ENCODE measurements at regions of chr12 and their contacts with region 1.

Region 1: GRCh38 chr12:46382964-46383653 is 10.5 kb upstream of the SLC38A2 start:
- DNase-seq: peak; percentile 85 to 98
- H3K4me3 ChIP-seq: peak overlapping the region; percentile 92
- H3K27ac ChIP-seq: peak overlapping the region; percentile 97
- H3K4me1 ChIP-seq: peaks cover 39% of the 10 kb centered on the region
- H3K27me3 ChIP-seq: no peaks in the 10 kb centered on the region
- CTCF ChIP-seq: no peak; the same call in 1 of the 2 replicates

Region 2: DNA sequence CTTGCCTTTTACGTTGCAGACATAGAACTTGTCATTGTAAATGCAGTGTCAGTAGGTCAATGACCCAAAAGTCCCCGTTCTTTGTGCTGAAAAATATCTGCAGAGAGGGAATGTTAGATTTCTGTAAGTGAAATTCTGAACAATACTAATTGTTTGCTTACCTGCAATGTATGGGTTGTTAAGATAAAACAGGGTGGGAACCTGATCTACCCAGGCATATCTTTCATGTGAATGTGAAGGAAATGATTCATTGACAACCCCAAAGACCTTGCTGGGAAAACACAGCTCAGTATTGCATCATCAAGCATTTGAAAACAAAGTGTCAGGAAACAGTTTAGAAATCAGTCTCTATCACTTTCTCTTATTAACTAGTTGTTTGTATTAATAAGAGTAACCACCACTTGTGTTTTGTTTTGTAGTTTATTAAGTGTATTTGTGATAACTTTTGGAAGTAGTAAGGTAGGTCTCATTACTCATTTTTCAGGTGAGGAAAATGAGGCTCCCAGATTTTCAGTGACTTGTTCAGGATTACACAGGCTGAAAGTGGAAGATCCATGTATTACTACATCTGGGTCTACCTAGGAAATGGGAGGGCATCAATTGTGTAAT is 47.3 kb after region 1 on chr12:
- CTCF ChIA-PET with region 1: no interaction called
- POLR2A ChIA-PET with region 1: interaction called, 8 read pairs
- intact Hi-C with region 1: loop called (anchors 1 kb)
- DNase-seq: peak; percentile 28 to 98
- H3K4me3 ChIP-seq: peak overlapping the region; percentile 34; the same call in 1 of the 2 replicates
- H3K27ac ChIP-seq: peak overlapping the region; percentile 95
- H3K4me1 ChIP-seq: peaks cover 41% of the 10 kb centered on the region
- H3K27me3 ChIP-seq: no peaks in the 10 kb centered on the region
- CTCF ChIP-seq: no peak

Region 3: GRCh38 chr12:46492471-46493351 is 109.6 kb after region 1 on chr12:
- CTCF ChIA-PET with region 1: no interaction called
- POLR2A ChIA-PET with region 1: interaction called, 8 read pairs
- intact Hi-C with region 1: loop called (anchors 2 kb)
- DNase-seq: peak; percentile 25 to 88
- H3K4me3 ChIP-seq: peak overlapping the region; percentile 3; the same call in 1 of the 2 replicates
- H3K27ac ChIP-seq: peak overlapping the region; percentile 81
- H3K4me1 ChIP-seq: peaks cover 47% of the 10 kb centered on the region
- H3K27me3 ChIP-seq: no peaks in the 10 kb centered on the region
- CTCF ChIP-seq: no peak

Region 4: DNA sequence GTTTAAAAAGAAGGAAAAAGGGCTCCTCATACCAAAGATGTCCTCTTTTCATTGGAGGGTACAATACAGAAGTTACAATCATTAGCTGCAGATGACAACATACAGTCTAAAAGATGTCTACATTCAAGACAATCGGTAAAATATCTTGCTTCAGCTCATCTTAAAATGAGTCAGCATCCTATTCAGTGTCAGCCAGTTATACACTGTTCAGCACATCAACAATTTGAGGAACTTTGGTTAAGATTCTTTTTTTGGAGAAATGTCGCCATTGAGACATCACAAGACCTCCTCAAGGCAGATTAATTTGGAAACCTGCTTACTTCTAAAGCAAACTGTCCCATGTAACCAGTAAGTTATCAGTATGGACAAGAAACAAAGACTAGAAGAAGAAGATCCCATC is 543.4 kb after region 1 on chr12:
- CTCF ChIA-PET with region 1: interaction called, 20 read pairs
- POLR2A ChIA-PET with region 1: no interaction called
- intact Hi-C with region 1: no loop called
- DNase-seq: no peak
- H3K4me3 ChIP-seq: no peak overlapping the region
- H3K27ac ChIP-seq: no peak overlapping the region
- H3K4me1 ChIP-seq: peaks cover 11% of the 10 kb centered on the region
- H3K27me3 ChIP-seq: no peaks in the 10 kb centered on the region
- CTCF ChIP-seq: no peak